Transverse colon (tissue), 4 donors: ENCODE measurements at regions of chr12 and their contacts with region 1.

Region 1: DNA sequence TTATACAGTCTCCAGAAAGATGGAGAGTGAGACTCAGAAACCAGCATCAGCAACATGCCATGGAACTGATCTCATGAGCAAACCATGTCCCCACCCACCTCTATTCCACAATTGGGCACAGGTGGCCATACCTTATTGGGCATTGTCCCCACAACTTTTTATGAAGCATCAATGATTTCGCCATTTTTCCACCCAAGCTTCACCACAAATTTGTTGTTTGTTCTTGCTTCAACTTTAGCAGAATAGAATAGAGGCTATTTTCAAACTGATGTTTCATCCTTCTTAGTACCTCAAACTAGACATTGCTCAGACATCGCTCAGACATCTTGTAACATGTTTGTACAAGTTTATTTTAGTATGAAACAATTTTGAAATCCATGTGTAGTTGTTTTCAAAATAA is 112.5 kb upstream of the TMTC2 start:
- DNase-seq: no peak
- H3K4me3 ChIP-seq: no peak overlapping the region
- H3K27ac ChIP-seq: no peak overlapping the region
- H3K4me1 ChIP-seq: no peaks in the 10 kb centered on the region
- H3K27me3 ChIP-seq: no peaks in the 10 kb centered on the region
- CTCF ChIP-seq: no peak
- EP300 ChIP-seq: no peak
- POLR2A ChIP-seq: no peak

Region 2: GRCh38 chr12:82279539-82280058 is 294.6 kb before region 1 on chr12:
- in situ Hi-C with region 1: no loop called
- intact Hi-C with region 1: no loop called
- DNase-seq: no peak
- H3K4me3 ChIP-seq: no peak overlapping the region
- H3K27ac ChIP-seq: no peak overlapping the region
- H3K4me1 ChIP-seq: no peaks in the 10 kb centered on the region
- H3K27me3 ChIP-seq: no peaks in the 10 kb centered on the region
- CTCF ChIP-seq: no peak
- EP300 ChIP-seq: no peak
- POLR2A ChIP-seq: no peak

Region 3: GRCh38 chr12:84069699-84070098 is 1495.5 kb after region 1 on chr12:
- in situ Hi-C with region 1: no loop called
- intact Hi-C with region 1: loop called (anchors 5 kb)
- DNase-seq: no peak
- H3K4me3 ChIP-seq: no peak overlapping the region
- H3K27ac ChIP-seq: no peak overlapping the region
- H3K4me1 ChIP-seq: no peaks in the 10 kb centered on the region
- H3K27me3 ChIP-seq: no peaks in the 10 kb centered on the region
- CTCF ChIP-seq: no peak
- EP300 ChIP-seq: no peak
- POLR2A ChIP-seq: no peak